ENCODE measurements at regions of chr12 and their contacts with region 1.

Region 1: GRCh38 chr12:22514875-22515274 is 29.5 kb downstream of the C2CD5 start:
- DNase-seq: no peak
- ATAC-seq: no peak
- H3K4me3 ChIP-seq: no peak overlapping the region
- H3K4me3 Mint-ChIP-seq: no peak overlapping the region
- H3K27ac ChIP-seq: no peak overlapping the region
- H3K27ac Mint-ChIP-seq: no peak overlapping the region
- H3K4me1 ChIP-seq: no peaks in the 10 kb centered on the region
- H3K4me1 Mint-ChIP-seq: peaks cover 4% of the 10 kb centered on the region
- H3K27me3 ChIP-seq: no peaks in the 10 kb centered on the region
- H3K27me3 Mint-ChIP-seq: no peaks in the 10 kb centered on the region
- CTCF ChIP-seq: no peak

Region 2: DNA sequence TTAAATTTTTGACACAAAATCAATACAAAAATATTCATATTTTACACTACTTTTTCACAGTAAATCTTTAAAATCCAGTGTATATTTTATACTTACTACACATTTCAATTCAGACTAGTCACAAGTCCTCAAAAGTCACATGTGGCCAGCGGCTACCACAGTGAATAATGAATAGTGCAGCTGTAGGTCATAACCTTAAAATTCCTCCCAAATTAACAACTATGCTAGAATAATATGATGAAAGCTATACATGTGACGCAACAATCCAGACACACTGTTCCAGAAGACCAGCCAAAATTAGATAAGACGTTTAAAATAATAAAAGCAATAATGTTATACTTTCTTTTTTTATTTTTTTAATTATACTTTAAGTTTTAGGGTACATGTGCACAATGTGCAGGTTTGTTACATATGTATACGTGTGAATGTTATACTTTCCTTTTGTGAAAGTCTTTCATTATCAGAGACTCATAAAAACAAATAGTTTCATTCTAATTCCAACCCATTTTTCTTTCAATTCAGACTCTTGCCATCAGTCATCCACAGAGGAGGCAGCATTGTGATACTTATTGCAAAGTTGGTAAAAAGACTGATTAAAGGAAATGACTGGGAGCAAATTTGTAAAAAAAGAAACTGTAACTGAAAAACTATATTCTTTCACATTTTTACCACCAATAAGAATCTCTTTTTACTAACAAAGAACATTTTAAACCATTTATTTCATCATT is 37.5 kb before region 1 on chr12:
- CTCF ChIA-PET with region 1: no interaction called
- POLR2A ChIA-PET with region 1: no interaction called
- intact Hi-C with region 1: loop called in 1 of 2 experiments (anchors 5 kb)
- DNase-seq: no peak
- ATAC-seq: no peak
- H3K4me3 ChIP-seq: no peak overlapping the region
- H3K4me3 Mint-ChIP-seq: no peak overlapping the region
- H3K27ac ChIP-seq: no peak overlapping the region
- H3K27ac Mint-ChIP-seq: no peak overlapping the region
- H3K4me1 ChIP-seq: no peaks in the 10 kb centered on the region
- H3K4me1 Mint-ChIP-seq: peaks cover 17% of the 10 kb centered on the region
- H3K27me3 ChIP-seq: no peaks in the 10 kb centered on the region
- H3K27me3 Mint-ChIP-seq: no peaks in the 10 kb centered on the region
- CTCF ChIP-seq: no peak